Motor neuron (in vitro differentiated cells): ENCODE measurements at regions of chr2 and their contacts with region 1.

Region 1: GRCh38 chr2:100730346-100730745 is 89.6 kb upstream of the NPAS2 start:
- ATAC-seq: peak in 3 of 8 experiments; percentile 68 to 94 (median 78)
- H3K4me3 ChIP-seq: no peak overlapping the region
- H3K27ac ChIP-seq: no peak overlapping the region
- H3K4me1 ChIP-seq: peaks cover 12 to 16% of the 10 kb centered on the region in 2 donors

Region 2: GRCh38 chr2:100976645-100977391 is 246.5 kb after region 1 on chr2:
- in situ Hi-C with region 1: loop called in 3 of 9 experiments (anchors 10 to 25 kb)
- ATAC-seq: peak in 5 of 8 experiments; percentile 86 to 95 (median 93)
- H3K4me3 ChIP-seq: no peak overlapping the region
- H3K27ac ChIP-seq: no peak overlapping the region
- H3K4me1 ChIP-seq: peaks cover 6 to 12% of the 10 kb centered on the region in 2 donors

Region 3: DNA sequence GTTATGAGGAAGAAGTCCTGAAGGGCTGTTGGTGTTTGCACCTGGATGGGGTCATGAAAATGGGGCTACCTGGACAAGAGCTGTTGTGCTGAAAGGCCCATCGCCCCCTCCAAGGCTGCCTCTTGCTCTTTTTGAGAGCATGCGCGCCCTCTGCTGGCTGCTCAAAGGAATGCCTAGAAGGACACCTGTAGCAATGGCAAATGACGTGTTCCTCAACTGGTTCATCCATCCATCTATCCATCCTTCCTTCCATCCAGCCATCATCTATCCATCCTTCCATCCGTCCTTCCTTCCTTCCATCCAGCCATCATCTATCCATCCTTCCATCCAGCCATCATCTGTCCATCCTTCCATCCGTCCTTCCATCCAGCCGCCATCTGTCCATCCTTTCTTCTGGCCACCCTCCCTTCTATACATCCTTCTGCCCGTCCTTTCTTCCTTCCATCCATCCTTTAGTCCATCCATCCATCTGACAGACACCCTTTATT is 254.6 kb after region 1 on chr2:
- in situ Hi-C with region 1: loop called in 2 of 9 experiments (anchors 25 kb)
- ATAC-seq: peak; percentile 71 to 91 (median 74)
- H3K4me3 ChIP-seq: no peak overlapping the region
- H3K27ac ChIP-seq: no peak overlapping the region
- H3K4me1 ChIP-seq: peaks cover 6 to 15% of the 10 kb centered on the region in 2 donors